ENCODE measurements at regions of chr12 and their contacts with region 1.

Region 1: DNA sequence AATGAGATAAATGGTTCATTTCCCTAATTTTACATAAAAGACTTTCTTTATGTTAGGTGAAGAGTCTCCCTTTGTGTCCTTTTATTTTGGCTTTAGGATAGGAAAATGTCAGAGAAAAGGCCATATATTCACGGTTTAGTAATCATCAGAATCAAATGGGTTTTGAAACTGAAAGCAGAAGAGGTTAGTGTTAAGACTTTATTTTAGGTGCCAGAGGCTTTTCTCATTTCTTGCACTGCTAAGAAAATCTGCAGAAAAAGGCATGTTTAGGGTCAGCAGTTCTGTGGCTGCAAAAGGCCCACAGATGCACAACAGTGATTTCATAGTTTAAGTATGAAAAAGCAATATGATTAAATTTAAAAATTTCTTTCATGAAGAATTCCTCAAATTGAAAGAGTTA is 80.4 kb upstream of the SINHCAF start:
- DNase-seq: no peak
- ATAC-seq: no peak
- H3K4me3 ChIP-seq: no peak overlapping the region
- H3K27ac ChIP-seq: no peak overlapping the region
- H3K4me1 ChIP-seq: no peaks in the 10 kb centered on the region
- H3K27me3 ChIP-seq: no peaks in the 10 kb centered on the region
- CTCF ChIP-seq: no peak

Region 2: GRCh38 chr12:31466768-31467167 is 60.4 kb after region 1 on chr12:
- intact Hi-C with region 1: no loop called
- DNase-seq: no peak
- ATAC-seq: no peak
- H3K4me3 ChIP-seq: no peak overlapping the region
- H3K27ac ChIP-seq: no peak overlapping the region
- H3K4me1 ChIP-seq: no peaks in the 10 kb centered on the region
- H3K27me3 ChIP-seq: no peaks in the 10 kb centered on the region
- CTCF ChIP-seq: no peak

Region 3: GRCh38 chr12:31644536-31644935 is 238.2 kb after region 1 on chr12:
- intact Hi-C with region 1: loop called (anchors 5 kb)
- DNase-seq: no peak
- ATAC-seq: no peak
- H3K4me3 ChIP-seq: no peak overlapping the region
- H3K27ac ChIP-seq: no peak overlapping the region
- H3K4me1 ChIP-seq: peaks cover 11% of the 10 kb centered on the region
- H3K27me3 ChIP-seq: no peaks in the 10 kb centered on the region
- CTCF ChIP-seq: no peak

Measured in lower lobe of right lung (tissue), 2 donors.